Activated B cell treated with CpG ODN at 0.5 μM for 24 hours (primary cell): ENCODE measurements at regions of chr1 and their contacts with region 1.

Region 1: DNA sequence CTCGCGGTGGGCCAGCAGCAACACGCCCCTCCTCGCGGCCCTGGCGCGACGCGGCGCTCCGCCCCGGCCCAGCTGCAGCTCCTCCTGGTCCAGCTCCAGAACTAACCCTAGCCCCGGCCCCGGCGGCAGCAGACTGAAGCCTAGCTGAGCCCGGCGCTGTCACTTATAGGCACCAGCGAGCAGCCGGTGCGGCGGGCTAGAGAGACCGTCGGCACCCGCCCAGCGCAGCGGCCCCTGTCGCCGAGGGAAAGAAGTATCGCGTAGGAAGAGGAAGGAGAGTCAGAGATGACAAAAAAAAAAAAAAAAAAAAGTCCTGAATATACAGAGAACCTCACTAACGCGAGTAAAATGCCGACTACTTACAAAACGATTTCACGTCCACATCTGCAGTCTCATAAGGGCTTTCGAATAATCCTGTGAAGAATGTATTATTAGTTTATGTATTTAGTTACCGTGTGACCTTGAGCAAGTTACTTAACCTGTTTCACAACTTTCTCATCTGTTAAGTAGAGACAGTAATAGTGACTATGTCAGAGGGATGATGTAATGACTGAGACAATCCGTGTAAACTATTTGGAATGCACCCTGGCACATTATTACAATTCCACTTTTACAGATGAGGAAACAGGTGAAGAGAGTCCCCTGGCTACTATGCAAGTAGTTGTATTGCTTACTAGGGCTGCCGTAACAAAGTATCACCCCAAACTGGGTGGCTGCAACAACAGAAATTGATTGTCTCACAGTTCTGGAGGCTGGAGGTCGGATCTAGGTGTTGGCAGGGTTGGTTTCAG is at the start of gene SLC9A1:
- DNase-seq: peak; percentile 94
- ATAC-seq: peak; percentile 95
- H3K4me3 Mint-ChIP-seq: peak within 1 kb of the TSS; percentile 86
- H3K27ac Mint-ChIP-seq: peak within 1 kb of the TSS; percentile 98
- H3K4me1 Mint-ChIP-seq: peaks cover 48% of the 10 kb centered on the region
- H3K27me3 Mint-ChIP-seq: no peaks in the 10 kb centered on the region
- CTCF ChIP-seq: peak; percentile 22
- total RNA-seq, gene SLC9A1: 12.2 and 13.6 TPM in 2 replicates

Region 2: DNA sequence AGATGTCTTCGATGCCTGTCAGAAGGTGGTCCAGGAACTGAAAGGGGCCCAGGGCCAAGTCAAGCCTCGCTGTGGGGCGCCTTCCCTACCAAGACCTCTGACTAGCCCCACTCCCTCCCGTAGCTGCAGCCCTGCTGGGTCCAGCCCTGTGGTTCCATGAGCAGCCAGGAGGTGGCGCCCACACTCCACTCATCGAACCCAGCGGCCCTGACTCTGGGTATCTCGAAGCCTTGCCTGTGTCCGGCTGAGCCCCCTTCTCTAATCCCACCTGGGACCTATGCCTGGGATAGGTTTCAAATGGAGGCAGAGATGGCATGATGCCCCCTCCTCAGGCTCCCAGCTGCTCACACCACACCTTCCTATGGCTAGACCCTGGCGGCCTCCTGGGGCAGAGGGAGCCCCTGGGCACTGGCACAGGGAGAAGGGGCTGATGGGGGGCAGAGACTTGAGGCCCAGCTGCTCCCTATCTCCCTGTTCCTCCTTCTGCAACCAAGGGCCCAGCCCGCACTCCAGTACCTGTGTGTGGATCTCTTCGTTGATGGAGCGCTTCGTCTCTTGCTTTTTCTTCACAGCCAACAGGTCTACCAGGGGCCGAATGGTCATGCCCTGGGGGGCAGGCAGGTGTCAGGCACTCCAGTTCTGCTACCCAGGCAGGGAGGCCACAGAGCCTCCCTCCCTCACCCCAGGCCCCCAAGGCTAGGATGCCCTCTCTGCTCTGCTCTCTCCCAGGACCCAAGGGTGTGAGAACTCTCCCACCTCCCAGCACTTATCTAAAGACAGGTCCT is 52.3 kb before region 1 on chr1:
- CTCF ChIA-PET with region 1: interaction called, 4 read pairs
- POLR2A ChIA-PET with region 1: interaction called, 10 read pairs
- intact Hi-C with region 1: loop called (anchors 2 kb)
- DNase-seq: peak; percentile 85
- ATAC-seq: peak; percentile 33
- H3K4me3 Mint-ChIP-seq: no peak overlapping the region
- H3K27ac Mint-ChIP-seq: no peak overlapping the region
- H3K4me1 Mint-ChIP-seq: peaks cover 41% of the 10 kb centered on the region
- H3K27me3 Mint-ChIP-seq: no peaks in the 10 kb centered on the region
- CTCF ChIP-seq: no peak

Region 3: GRCh38 chr1:27136998-27137542 is 18.1 kb before region 1 on chr1:
- CTCF ChIA-PET with region 1: interaction called, 4 read pairs
- POLR2A ChIA-PET with region 1: interaction called, 127 read pairs
- intact Hi-C with region 1: loop called (anchors 1 kb)
- DNase-seq: peak; percentile 41
- ATAC-seq: peak; percentile 83
- H3K4me3 Mint-ChIP-seq: peak overlapping the region; percentile 66
- H3K27ac Mint-ChIP-seq: peak overlapping the region; percentile 93
- H3K4me1 Mint-ChIP-seq: peaks cover 56% of the 10 kb centered on the region
- H3K27me3 Mint-ChIP-seq: no peaks in the 10 kb centered on the region
- CTCF ChIP-seq: no peak

Region 4: GRCh38 chr1:27241677-27242076 is 86.5 kb after region 1 on chr1:
- CTCF ChIA-PET with region 1: no interaction called
- POLR2A ChIA-PET with region 1: no interaction called
- intact Hi-C with region 1: no loop called
- DNase-seq: no peak
- ATAC-seq: no peak
- H3K4me3 Mint-ChIP-seq: no peak overlapping the region
- H3K27ac Mint-ChIP-seq: no peak overlapping the region
- H3K4me1 Mint-ChIP-seq: peaks cover 23% of the 10 kb centered on the region
- H3K27me3 Mint-ChIP-seq: no peaks in the 10 kb centered on the region
- CTCF ChIP-seq: no peak

Region 5: DNA sequence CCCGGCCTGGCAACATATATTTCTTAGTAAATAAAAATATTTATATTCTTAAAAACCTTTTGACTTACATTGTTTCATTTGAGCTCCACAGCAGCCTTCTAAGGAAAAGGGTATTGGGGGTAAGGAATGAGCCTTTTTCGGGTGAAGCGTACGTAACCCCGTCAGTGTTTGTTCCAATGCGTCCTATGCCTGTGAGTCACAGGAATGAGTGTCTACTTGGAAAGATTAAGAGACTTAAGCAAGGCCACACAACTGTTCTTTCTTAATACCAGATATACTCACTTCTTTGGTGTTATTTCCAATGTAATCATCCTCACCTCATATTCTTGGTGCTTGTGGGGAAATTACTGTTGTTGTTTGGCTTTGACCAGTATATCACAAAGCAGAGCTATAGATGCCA is 102.0 kb after region 1 on chr1:
- CTCF ChIA-PET with region 1: no interaction called
- POLR2A ChIA-PET with region 1: interaction called, 18 read pairs
- intact Hi-C with region 1: no loop called
- DNase-seq: no peak
- ATAC-seq: no peak
- H3K4me3 Mint-ChIP-seq: no peak overlapping the region
- H3K27ac Mint-ChIP-seq: peak overlapping the region; percentile 18
- H3K4me1 Mint-ChIP-seq: peaks cover 47% of the 10 kb centered on the region
- H3K27me3 Mint-ChIP-seq: no peaks in the 10 kb centered on the region
- CTCF ChIP-seq: no peak